HepG2 (cell line): ENCODE measurements at regions of chr2 and their contacts with region 1.

Region 1: DNA sequence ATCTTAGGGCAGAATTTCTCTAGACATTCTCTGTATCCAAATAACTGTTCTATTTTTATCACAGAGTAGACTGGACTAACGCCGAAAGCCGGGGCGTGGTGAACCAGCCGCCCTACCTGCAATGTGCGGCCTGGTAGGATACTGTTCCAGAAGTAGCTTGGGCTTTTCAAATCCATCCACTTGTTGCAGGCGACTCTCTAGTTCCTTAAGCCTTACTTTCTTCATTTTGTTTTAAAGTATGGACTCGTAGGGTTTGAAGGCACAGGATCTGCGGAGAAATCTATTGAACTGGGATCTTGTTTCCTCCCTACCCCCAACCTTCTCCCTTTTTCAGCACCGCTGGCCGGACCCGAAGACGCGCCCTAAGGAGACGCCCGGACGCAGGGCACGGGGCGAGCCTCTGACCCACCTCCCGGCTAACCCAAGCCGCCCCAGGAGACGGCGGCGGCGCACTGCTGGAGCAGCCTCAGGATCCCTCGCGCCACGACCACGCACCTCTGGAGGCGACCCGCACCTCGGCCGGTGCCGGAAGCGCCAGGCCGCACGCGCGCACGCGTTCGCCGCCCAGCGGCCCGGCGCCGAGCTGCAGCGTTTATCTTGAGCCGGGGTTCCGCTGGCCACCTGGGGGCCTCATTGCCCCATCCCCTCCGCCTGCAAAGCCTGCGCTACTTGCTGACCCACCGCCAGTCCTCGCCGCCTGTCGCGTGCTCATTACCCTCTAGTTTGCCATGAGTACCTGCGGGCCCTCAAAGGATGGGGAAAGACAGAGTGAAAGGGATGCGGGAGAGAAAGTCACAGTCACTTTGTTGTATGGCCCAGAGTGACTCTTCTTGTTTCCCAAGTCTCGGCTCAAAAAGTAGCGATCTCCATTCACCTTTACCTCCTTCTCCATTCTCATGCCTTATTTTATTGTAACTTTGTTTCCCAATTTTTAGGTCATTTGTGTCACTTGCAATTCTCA is at the start of gene METTL5:
- DNase-seq: peak; percentile 82
- ATAC-seq: peak; percentile 80
- H3K4me3 ChIP-seq: peak within 1 kb of the TSS; percentile 86 to 97 (median 88)
- H3K27ac ChIP-seq: peak within 1 kb of the TSS; percentile 69
- H3K4me1 ChIP-seq: peaks cover 58% of the 10 kb centered on the region
- H3K27me3 ChIP-seq: no peaks in the 10 kb centered on the region; a peak in 1 of 5 replicates
- CTCF ChIP-seq: peak; percentile 98
- EP300 ChIP-seq: no peak
- POLR2A ChIP-seq: peak; percentile 84 to 98
- RAD21 ChIP-seq: peak; percentile 98
- total RNA-seq, gene METTL5: 95.1 and 129 TPM in 2 replicates

Region 2: DNA sequence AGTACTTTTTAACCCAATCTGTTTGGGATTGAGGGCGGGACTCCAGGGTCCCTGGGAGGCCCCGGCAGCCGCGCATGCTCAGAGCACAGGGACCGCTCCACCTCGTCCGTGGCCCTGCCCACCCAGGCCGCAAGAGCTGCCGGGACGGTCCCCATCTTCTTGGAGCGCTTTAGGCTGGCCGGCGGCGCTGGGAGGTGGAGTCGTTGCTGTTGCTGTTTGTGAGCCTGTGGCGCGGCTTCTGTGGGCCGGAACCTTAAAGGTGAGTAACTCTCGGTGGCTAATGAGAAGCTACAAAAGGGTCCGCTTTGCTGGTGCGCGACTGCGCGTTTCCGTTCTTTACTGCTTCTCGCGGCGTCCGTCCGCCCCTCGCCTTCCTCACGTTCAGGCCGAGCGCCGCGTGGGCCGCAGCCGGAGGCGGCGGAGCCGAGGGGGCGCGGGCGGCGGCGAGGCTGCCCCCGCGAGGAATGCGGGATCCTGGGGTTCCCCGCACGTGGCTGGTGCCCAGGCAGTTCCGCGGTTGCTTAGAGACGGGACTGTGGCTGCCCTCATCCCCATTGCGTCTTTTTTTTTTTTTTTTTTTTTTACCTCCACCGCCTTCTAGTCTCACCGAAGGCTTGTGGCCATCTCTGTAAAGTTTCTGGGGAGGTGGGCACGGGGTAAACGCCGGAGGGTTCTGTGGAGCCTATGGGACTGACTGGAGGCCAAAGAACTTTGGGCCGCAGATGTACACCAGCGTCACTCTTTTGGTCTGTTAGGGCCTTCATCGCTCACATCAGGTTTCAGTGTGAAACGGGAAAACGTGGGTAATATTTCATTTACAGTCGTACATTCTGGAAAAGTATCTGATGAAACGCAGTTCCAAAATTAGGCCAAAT is 25.7 kb before region 1 on chr2 and contains the start of gene SSB:
- CTCF ChIA-PET with region 1: no interaction called
- POLR2A ChIA-PET with region 1: interaction called, 16 read pairs
- in situ Hi-C with region 1: no loop called
- intact Hi-C with region 1: loop called (anchors 2 kb)
- DNase-seq: peak; percentile 89
- ATAC-seq: peak; percentile 98
- H3K4me3 ChIP-seq: peak within 1 kb of the TSS; percentile 79 to 96 (median 88)
- H3K27ac ChIP-seq: peak within 1 kb of the TSS; percentile 68
- H3K4me1 ChIP-seq: peaks cover 44% of the 10 kb centered on the region
- H3K27me3 ChIP-seq: no peaks in the 10 kb centered on the region; a peak in 1 of 5 replicates
- CTCF ChIP-seq: 0 out of 2 replicates have a peak, but pooled peaks have one; percentile 26
- EP300 ChIP-seq: no peak; a peak in 1 of 4 replicates
- POLR2A ChIP-seq: peak; percentile 82 to 98
- RAD21 ChIP-seq: 0 out of 2 replicates have a peak, but pooled peaks have one; percentile 39
- total RNA-seq, gene SSB: 208 and 344 TPM in 2 replicates

Region 3: DNA sequence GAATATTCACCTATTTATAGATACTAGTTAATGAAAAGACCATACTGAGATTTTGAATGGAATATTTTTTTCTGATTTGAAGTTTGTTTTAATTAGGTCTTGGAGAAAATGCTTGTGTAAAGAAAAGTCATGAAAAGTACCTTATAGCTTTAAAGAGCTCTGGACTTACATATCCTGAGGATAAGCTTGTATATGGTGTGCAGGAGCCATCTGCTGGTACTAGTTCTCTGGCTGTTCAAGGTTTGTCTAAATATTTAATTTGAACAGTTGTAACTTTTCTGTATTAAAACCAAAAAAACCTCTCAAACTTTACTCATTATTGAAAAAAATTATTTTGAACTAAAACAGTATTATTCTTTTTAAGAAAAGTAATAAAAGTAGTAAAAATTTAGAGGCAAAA is 52.7 kb after region 1 on chr2:
- CTCF ChIA-PET with region 1: interaction called, 15 read pairs
- POLR2A ChIA-PET with region 1: no interaction called
- in situ Hi-C with region 1: no loop called
- intact Hi-C with region 1: loop called (anchors 1 kb)
- DNase-seq: peak; percentile 31
- ATAC-seq: peak; percentile 72
- H3K4me3 ChIP-seq: no peak overlapping the region
- H3K27ac ChIP-seq: no peak overlapping the region
- H3K4me1 ChIP-seq: no peaks in the 10 kb centered on the region
- H3K27me3 ChIP-seq: no peaks in the 10 kb centered on the region
- CTCF ChIP-seq: peak; percentile 52
- EP300 ChIP-seq: no peak
- POLR2A ChIP-seq: no peak
- RAD21 ChIP-seq: 0 out of 2 replicates have a peak, but pooled peaks have one; percentile 19

Region 4: DNA sequence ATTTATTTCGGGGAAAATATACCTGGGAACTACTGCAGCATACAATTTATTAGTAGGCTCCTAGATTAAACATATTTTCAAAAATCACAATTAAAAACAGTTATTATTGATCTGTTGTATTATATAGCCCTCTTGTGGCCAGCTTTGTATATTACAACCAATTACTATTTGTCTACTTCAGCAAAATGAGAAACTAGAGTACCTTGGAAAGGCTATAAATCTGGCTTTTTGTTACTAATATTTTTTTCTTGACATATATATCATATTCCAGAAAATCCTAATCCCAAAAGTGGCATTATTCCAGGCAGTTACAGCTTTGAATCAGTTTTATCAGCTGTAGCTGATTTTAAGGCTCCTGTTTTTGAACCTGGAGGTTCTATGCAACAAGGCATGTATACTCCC is 103.8 kb after region 1 on chr2:
- CTCF ChIA-PET with region 1: interaction called, 21 read pairs
- POLR2A ChIA-PET with region 1: no interaction called
- in situ Hi-C with region 1: no loop called
- intact Hi-C with region 1: loop called (anchors 2 kb)
- DNase-seq: peak; percentile 48
- ATAC-seq: no peak
- H3K4me3 ChIP-seq: no peak overlapping the region
- H3K27ac ChIP-seq: no peak overlapping the region
- H3K4me1 ChIP-seq: no peaks in the 10 kb centered on the region
- H3K27me3 ChIP-seq: no peaks in the 10 kb centered on the region
- CTCF ChIP-seq: peak; percentile 57
- EP300 ChIP-seq: no peak
- POLR2A ChIP-seq: no peak
- RAD21 ChIP-seq: 0 out of 2 replicates have a peak, but pooled peaks have one; percentile 27